Left ventricle myocardium inferior (tissue), 1 donor: ENCODE measurements at regions of chr3 and their contacts with region 1.

Region 1: DNA sequence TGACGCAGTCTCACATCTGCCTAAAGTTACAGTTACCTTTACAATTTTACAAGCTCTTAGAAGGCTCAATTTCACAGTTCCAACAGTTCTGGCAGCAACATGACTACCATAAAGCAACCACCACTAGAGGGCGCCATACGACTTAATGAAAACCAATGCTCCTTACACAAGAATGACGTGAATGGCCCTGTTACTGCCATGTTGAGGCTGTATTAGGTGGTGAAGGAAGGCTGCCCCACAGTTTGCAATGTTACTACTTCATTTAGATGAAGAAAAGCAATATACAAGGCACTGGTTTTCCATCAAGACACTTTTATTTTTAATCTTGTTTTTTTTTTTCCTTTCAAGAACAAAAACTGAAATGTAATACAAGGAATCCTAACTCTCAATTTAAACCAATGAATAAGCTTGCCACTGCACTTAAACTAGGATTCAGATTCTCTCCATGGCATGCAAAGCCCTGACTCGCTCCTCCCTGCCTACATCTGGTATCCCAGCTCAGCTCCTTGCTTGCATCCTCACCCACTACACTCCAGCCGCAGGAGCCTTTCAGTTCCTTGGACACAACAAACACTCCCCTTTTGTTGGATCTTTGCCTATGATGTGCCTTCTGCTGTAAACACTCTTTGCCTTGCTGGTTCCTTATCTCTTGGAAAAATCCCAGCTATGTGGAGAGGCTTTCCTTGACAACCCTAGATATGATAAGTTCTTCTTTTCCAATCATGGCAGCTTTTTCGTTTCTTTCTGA is 270.7 kb downstream of the GBE1 start:
- DNase-seq: peak; percentile 34
- H3K4me3 ChIP-seq: no peak overlapping the region
- H3K27ac ChIP-seq: peak overlapping the region; percentile 36
- H3K4me1 ChIP-seq: peaks cover 26% of the 10 kb centered on the region
- H3K27me3 ChIP-seq: no peaks in the 10 kb centered on the region
- CTCF ChIP-seq: peak; percentile 75

Region 2: DNA sequence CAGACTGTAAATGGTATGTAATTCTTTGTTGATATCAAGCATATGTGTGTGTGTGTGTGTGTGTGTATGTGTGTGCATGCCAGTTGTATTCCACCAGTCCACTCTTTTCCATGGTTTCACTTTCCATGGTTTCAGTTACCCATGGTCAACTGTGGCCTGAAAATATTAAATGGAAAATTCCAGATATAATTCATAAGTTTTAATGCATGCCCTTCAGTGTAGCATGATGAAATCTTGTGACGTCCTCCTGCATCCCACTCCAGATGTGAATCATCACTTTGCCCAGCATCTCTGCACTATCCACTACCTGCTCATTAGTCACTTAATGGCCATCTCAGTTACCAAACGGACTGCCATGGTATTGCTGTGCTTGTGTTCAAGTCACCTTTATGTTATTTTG is 54.9 kb after region 1 on chr3:
- intact Hi-C with region 1: loop called (anchors 10 kb)
- DNase-seq: no peak
- H3K4me3 ChIP-seq: no peak overlapping the region
- H3K27ac ChIP-seq: no peak overlapping the region
- H3K4me1 ChIP-seq: peaks cover 18% of the 10 kb centered on the region
- H3K27me3 ChIP-seq: no peaks in the 10 kb centered on the region
- CTCF ChIP-seq: no peak